ENCODE measurements at regions of chr10 and their contacts with region 1.

Region 1: DNA sequence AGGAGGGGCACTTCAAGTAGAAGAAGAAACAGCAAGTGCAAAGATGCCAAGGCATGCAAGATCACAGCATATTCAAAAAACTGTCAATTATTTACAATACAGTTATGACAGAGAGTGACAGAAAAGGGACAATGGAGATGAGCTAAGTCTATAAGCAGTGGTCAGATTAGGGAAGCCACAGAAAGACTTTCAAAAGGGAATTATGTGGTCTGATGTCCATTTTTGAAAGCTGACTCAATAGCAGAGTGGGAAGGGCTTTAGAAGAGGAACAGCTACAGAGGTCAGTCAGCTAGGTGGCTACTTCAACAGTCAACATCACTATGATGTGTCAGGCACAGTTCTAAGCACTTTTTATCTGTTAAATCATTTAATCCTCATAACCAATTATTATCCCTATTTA is 45.2 kb upstream of the SPOCK2 start:
- DNase-seq: no peak
- ATAC-seq: peak; percentile 74
- H3K4me3 ChIP-seq: no peak overlapping the region
- H3K4me3 Mint-ChIP-seq: peak overlapping the region in 1 of 10 donors; percentile 56
- H3K27ac ChIP-seq: no peak overlapping the region
- H3K27ac Mint-ChIP-seq: peak overlapping the region; percentile 16 to 94 (median 83)
- H3K4me1 ChIP-seq: peaks cover 0 to 19% of the 10 kb centered on the region in 2 donors
- H3K4me1 Mint-ChIP-seq: peaks cover 22 to 46% (median 37%) of the 10 kb centered on the region in 7 donors
- H3K27me3 ChIP-seq: no peaks in the 10 kb centered on the region
- H3K27me3 Mint-ChIP-seq: no peaks in the 10 kb centered on the region

Region 2: DNA sequence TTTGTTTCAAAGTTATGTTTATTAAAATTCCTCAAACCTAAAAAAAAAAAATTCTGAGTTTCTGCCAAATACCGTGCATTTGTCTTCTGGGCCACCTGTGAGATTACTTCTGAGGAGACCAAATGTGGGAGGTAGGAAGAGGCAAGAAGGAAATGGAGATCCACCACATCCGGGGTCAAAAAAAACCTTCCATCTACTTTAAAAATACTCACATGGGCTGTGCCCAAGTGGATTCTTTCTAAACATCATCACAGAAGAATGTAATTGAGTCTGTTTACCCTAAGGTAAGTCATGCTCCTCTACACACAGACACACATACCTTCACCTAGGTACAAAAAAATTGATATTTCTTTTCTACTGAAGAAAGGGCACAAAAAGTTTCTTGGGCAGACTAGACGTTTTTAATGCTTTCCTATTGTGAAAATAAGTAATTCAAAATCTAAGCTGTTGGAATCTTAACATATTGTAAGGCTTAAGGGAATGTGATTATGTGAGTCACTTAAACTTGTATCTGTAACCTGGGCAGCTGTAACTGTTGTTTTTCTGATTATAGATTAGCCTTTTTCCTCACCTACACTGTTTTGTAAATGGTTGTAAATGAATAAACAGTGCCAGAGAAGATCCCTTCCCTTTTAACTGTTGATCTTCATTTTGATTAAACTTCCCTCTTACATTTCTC is 26.1 kb before region 1 on chr10:
- CTCF ChIA-PET with region 1: no interaction called
- POLR2A ChIA-PET with region 1: interaction called, 4 read pairs
- intact Hi-C with region 1: loop called in 1 of 2 experiments (anchors 1 kb)
- DNase-seq: peak in 7 of 9 donors; percentile 63 to 77 (median 74)
- ATAC-seq: peak; percentile 82
- H3K4me3 ChIP-seq: peak overlapping the region; percentile 10
- H3K4me3 Mint-ChIP-seq: peak overlapping the region; percentile 67 to 85 (median 78)
- H3K27ac ChIP-seq: peak overlapping the region; percentile 72
- H3K27ac Mint-ChIP-seq: peak overlapping the region; percentile 79 to 96 (median 89)
- H3K4me1 ChIP-seq: peaks cover 32 to 84% of the 10 kb centered on the region in 2 donors
- H3K4me1 Mint-ChIP-seq: peaks cover 53 to 96% (median 89%) of the 10 kb centered on the region in 7 donors
- H3K27me3 ChIP-seq: no peaks in the 10 kb centered on the region
- H3K27me3 Mint-ChIP-seq: no peaks in the 10 kb centered on the region

Region 3: DNA sequence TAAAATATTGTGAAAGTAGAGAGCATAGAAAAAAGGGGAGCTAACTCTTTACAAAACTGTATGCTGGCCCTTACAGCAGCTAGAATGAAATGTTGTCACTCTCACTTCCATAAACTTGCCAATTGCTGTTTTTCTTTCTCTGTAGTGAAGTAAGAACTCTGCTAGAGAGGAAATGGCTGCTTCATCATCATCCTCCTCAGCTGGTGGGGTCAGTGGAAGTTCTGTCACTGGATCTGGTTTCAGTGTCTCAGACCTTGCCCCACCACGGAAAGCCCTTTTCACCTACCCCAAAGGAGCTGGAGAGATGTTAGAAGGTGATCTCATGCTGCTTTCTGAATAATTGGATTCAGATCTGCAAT is 90.2 kb after region 1 on chr10:
- CTCF ChIA-PET with region 1: interaction called, 12 read pairs
- POLR2A ChIA-PET with region 1: interaction called, 4 read pairs
- intact Hi-C with region 1: loop called in 1 of 2 experiments (anchors 2 kb)
- DNase-seq: no peak
- ATAC-seq: peak; percentile 37
- H3K4me3 ChIP-seq: no peak overlapping the region
- H3K4me3 Mint-ChIP-seq: peak overlapping the region in 8 of 10 donors; percentile 43 to 81 (median 56)
- H3K27ac ChIP-seq: peak overlapping the region; percentile 43
- H3K27ac Mint-ChIP-seq: peak overlapping the region; percentile 35 to 89 (median 72)
- H3K4me1 ChIP-seq: peaks cover 9 to 48% of the 10 kb centered on the region in 2 donors
- H3K4me1 Mint-ChIP-seq: peaks cover 43 to 68% (median 57%) of the 10 kb centered on the region in 7 donors
- H3K27me3 ChIP-seq: no peaks in the 10 kb centered on the region
- H3K27me3 Mint-ChIP-seq: no peaks in the 10 kb centered on the region

Region 4: DNA sequence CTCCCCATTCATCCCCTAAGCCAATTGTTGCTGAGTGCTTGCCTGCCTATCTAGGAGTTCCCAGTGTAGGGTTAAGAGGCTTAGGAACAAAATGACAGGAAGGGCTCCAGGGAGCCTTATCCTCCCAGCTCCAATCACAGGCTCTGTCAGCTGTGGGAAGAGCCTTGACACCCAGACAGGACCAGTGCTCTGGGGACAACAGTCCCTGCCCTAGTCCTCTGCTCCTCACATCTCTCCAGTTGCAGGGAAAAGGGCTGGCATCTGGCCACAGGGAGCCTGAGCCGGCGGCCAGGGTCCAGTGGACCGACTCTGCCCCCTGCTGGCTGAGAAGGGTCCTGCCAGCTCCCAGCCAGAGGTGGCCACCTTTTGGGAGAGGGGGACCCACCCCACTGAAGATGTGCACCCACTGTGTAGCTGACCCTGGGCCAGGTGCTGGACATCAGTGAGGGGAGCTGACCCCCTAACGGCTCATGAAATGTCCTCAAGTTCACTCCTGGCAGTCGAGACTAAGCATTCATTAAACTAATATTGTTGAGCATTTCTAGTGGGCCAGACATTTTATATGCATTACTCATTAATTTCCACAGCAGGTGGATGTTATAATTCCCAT is 203.6 kb after region 1 on chr10:
- CTCF ChIA-PET with region 1: interaction called, 53 read pairs
- POLR2A ChIA-PET with region 1: interaction called, 5 read pairs
- intact Hi-C with region 1: loop called in 1 of 2 experiments (anchors 1 kb)
- DNase-seq: peak; percentile 34 to 77 (median 56)
- ATAC-seq: peak; percentile 25
- H3K4me3 ChIP-seq: no peak overlapping the region
- H3K4me3 Mint-ChIP-seq: peak overlapping the region in 4 of 10 donors; percentile 12 to 93 (median 30)
- H3K27ac ChIP-seq: peak overlapping the region; percentile 79
- H3K27ac Mint-ChIP-seq: peak overlapping the region; percentile 29 to 99 (median 92)
- H3K4me1 ChIP-seq: peaks cover 52 to 58% of the 10 kb centered on the region in 2 donors
- H3K4me1 Mint-ChIP-seq: peaks cover 31 to 66% (median 55%) of the 10 kb centered on the region in 7 donors
- H3K27me3 ChIP-seq: no peaks in the 10 kb centered on the region
- H3K27me3 Mint-ChIP-seq: no peaks in the 10 kb centered on the region